ENCODE measurements at regions of chr9 and their contacts with region 1.

Region 1: DNA sequence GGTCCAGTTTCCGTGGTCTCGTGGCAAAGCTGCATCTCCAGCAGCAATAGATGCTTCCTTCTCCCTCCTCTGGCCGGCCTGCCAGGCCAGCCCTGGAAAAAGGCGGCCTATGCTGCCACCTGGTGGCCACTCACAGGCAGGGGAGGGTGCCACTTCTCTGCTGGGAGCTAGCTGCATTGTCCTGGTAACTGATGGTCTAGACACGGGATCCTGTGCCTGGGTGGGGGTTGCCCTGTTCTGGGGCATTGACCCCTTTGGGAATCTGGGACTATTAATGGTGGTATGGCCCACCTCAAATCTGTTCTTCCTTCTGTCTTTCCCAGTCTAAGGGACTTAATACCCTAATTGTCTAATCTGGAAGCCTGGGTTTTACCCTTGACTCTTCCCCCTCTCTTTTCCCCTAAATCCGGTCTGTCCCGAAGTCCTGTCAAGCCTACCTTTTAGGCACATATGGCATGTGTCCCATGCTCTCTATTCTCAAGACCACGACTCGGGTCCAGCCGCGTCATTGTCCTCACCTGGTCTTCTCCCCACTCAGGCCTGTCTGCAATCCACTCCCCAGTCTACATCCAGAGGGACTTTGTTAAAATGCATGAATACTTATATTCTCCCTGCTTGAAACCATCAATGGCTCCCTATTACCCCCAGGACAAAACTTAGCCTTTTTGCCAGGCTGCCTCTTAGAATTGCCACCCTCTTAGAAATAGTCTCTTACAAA is 20.0 kb upstream of the PTGS1 start:
- DNase-seq: peak; percentile 47
- ATAC-seq: peak; percentile 94
- H3K4me3 ChIP-seq: no peak overlapping the region
- H3K27ac ChIP-seq: no peak overlapping the region
- H3K4me1 ChIP-seq: peaks cover 4% of the 10 kb centered on the region; the same call in 1 of the 2 replicates
- H3K27me3 ChIP-seq: no peaks in the 10 kb centered on the region
- CTCF ChIP-seq: peak; percentile 81

Region 2: GRCh38 chr9:121861501-121862180 is 489.2 kb before region 1 on chr9:
- CTCF ChIA-PET with region 1: no interaction called
- POLR2A ChIA-PET with region 1: no interaction called
- in situ Hi-C with region 1: no loop called
- intact Hi-C with region 1: no loop called
- DNase-seq: peak; percentile 7
- ATAC-seq: peak; percentile 82; the same call in 1 of the 2 replicates
- H3K4me3 ChIP-seq: no peak overlapping the region
- H3K27ac ChIP-seq: no peak overlapping the region
- H3K4me1 ChIP-seq: no peaks in the 10 kb centered on the region
- H3K27me3 ChIP-seq: no peaks in the 10 kb centered on the region
- CTCF ChIP-seq: peak; percentile 66

Region 3: DNA sequence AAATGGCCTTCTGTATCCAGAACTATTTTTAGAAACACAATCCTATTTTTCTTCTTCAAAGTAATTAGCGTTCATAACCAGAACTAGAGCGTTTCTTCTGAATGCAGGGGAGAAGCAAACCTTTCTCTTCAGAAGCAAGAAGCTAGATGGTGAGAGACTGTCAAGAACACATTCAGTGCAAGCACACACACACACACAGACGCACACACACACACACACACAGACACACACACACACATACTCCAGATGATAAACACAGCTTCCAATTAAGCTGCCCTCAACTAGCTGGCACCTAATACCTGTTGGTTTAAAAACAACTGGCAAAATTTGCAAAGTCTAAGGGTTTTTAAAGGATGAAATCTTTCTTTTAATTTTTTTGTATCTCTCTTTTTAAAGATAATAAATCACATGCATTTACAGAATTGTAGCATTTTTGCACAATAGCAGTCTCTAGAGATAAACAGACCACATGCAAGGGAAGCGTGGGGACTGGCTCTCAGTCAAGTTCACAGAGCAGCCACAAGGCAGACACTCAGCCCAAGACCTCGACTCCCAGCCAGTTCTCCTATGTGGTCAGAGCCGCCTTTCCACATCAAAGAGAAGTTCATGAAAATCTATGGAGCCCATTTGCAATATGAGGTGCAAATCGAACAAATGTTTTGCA is 396.2 kb before region 1 on chr9:
- CTCF ChIA-PET with region 1: interaction called, 14 read pairs
- POLR2A ChIA-PET with region 1: no interaction called
- in situ Hi-C with region 1: no loop called
- intact Hi-C with region 1: no loop called
- DNase-seq: no peak
- ATAC-seq: no peak
- H3K4me3 ChIP-seq: no peak overlapping the region
- H3K27ac ChIP-seq: no peak overlapping the region
- H3K4me1 ChIP-seq: no peaks in the 10 kb centered on the region
- H3K27me3 ChIP-seq: no peaks in the 10 kb centered on the region
- CTCF ChIP-seq: no peak

Region 4: DNA sequence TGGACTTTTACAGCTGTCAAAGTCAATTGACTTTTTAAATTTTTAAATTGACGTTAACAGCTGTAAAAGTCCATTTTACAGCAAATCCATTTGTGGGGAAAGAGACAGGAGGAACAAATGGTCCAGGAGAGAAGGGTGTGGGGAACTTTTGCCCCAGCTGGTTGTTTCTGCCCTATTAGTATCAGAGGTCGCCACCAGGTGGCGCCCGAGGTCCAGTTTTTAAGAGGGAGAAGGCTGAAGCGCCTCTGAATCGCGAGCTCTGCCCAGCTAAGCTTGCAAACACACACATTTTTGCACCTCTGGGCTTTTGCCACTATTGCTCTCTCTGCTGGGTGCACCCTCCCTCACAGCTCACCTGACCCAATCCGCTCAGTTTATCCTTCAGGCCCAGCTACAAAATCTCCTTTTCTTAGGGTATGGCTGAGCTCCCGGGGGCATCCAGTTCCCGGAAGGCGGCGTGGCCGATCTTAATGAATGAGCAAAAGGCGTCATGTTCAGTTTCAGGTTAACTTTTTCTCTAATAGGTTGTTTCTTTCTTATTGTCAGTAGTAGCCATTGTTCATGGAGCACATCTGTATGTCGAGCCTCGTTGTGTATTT is 251.4 kb before region 1 on chr9:
- CTCF ChIA-PET with region 1: interaction called, 13 read pairs
- POLR2A ChIA-PET with region 1: no interaction called
- in situ Hi-C with region 1: no loop called
- intact Hi-C with region 1: loop called (anchors 2 kb)
- DNase-seq: peak; percentile 32
- ATAC-seq: peak; percentile 90
- H3K4me3 ChIP-seq: no peak overlapping the region
- H3K27ac ChIP-seq: no peak overlapping the region
- H3K4me1 ChIP-seq: no peaks in the 10 kb centered on the region
- H3K27me3 ChIP-seq: no peaks in the 10 kb centered on the region
- CTCF ChIP-seq: peak; percentile 80

Region 5: GRCh38 chr9:122125158-122125508 is 225.7 kb before region 1 on chr9:
- CTCF ChIA-PET with region 1: interaction called, 26 read pairs
- POLR2A ChIA-PET with region 1: interaction called, 3 read pairs
- in situ Hi-C with region 1: no loop called
- intact Hi-C with region 1: loop called (anchors 1 kb)
- DNase-seq: peak; percentile 38
- ATAC-seq: peak; percentile 86
- H3K4me3 ChIP-seq: no peak overlapping the region
- H3K27ac ChIP-seq: no peak overlapping the region
- H3K4me1 ChIP-seq: no peaks in the 10 kb centered on the region; the same call in 1 of the 2 replicates
- H3K27me3 ChIP-seq: no peaks in the 10 kb centered on the region
- CTCF ChIP-seq: peak; percentile 90

Region 6: GRCh38 chr9:122252796-122253195 is 98.0 kb before region 1 on chr9:
- CTCF ChIA-PET with region 1: no interaction called
- POLR2A ChIA-PET with region 1: no interaction called
- in situ Hi-C with region 1: no loop called
- intact Hi-C with region 1: no loop called
- DNase-seq: no peak
- ATAC-seq: no peak
- H3K4me3 ChIP-seq: no peak overlapping the region
- H3K27ac ChIP-seq: no peak overlapping the region
- H3K4me1 ChIP-seq: no peaks in the 10 kb centered on the region
- H3K27me3 ChIP-seq: no peaks in the 10 kb centered on the region
- CTCF ChIP-seq: no peak

Region 7: DNA sequence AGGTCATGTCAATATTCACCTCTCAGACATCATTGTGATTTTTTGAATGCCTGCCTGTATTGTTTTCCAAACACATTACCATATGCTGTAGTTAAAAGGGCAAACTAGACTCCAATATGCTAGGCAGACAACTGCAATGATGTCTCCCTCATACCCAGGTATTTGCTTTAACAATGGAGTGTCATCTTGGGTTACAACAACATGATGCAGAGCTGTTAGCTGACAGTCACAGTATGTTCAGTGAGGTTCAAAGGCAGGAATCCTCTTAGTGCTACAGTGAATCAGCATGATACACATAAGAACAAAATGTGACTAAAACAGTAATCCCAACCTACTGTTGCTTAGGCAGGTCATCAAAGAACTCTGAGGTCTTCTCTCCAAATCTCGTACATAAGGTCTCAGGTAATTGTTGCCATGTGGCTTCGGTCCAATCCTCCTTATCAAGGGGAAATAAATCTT is 102.9 kb after region 1 on chr9:
- CTCF ChIA-PET with region 1: no interaction called
- POLR2A ChIA-PET with region 1: no interaction called
- in situ Hi-C with region 1: no loop called
- intact Hi-C with region 1: loop called (anchors 1 kb)
- DNase-seq: no peak
- ATAC-seq: no peak
- H3K4me3 ChIP-seq: no peak overlapping the region
- H3K27ac ChIP-seq: no peak overlapping the region
- H3K4me1 ChIP-seq: no peaks in the 10 kb centered on the region
- H3K27me3 ChIP-seq: 0 out of 2 replicates have a peak, but pooled peaks cover 2% of the 10 kb centered on the region
- CTCF ChIP-seq: no peak

Region 8: GRCh38 chr9:122810306-122810946 is 459.6 kb after region 1 on chr9:
- CTCF ChIA-PET with region 1: no interaction called
- POLR2A ChIA-PET with region 1: no interaction called
- in situ Hi-C with region 1: no loop called
- intact Hi-C with region 1: loop called (anchors 5 kb)
- DNase-seq: peak; percentile 47
- ATAC-seq: peak; percentile 95
- H3K4me3 ChIP-seq: no peak overlapping the region
- H3K27ac ChIP-seq: no peak overlapping the region
- H3K4me1 ChIP-seq: no peaks in the 10 kb centered on the region
- H3K27me3 ChIP-seq: no peaks in the 10 kb centered on the region
- CTCF ChIP-seq: peak; percentile 73

Measured in Panc1 (cell line).